ENCODE measurements at regions of chr17 and their contacts with region 1.

Region 1: GRCh38 chr17:81346090-81346907 is 49.0 kb upstream of the BAHCC1 start:
- DNase-seq: peak; percentile 93 to 99
- H3K4me3 ChIP-seq: peak overlapping the region; percentile 83 to 94
- H3K27ac ChIP-seq: peak overlapping the region; percentile 82 to 91
- H3K4me1 ChIP-seq: peaks cover 0 to 22% of the 10 kb centered on the region in 2 donors
- H3K27me3 ChIP-seq: no peaks in the 10 kb centered on the region
- CTCF ChIP-seq: no peak

Region 2: GRCh38 chr17:81165246-81166032 is 180.9 kb before region 1 on chr17 and contains the start of gene PVALEF:
- intact Hi-C with region 1: no loop called
- DNase-seq: no peak
- H3K4me3 ChIP-seq: peak within 1 kb of the TSS; percentile 25 to 67
- H3K27ac ChIP-seq: peak within 1 kb of the TSS; percentile 5 to 33
- H3K4me1 ChIP-seq: peaks cover 3% of the 10 kb centered on the region in 2 donors
- H3K27me3 ChIP-seq: no peaks in the 10 kb centered on the region
- CTCF ChIP-seq: no peak
- total RNA-seq, gene PVALEF: not detected

Region 3: GRCh38 chr17:81309070-81309905 is 37.0 kb before region 1 on chr17:
- intact Hi-C with region 1: no loop called
- DNase-seq: peak; percentile 54 to 91
- H3K4me3 ChIP-seq: peak overlapping the region; percentile 16 to 42
- H3K27ac ChIP-seq: peak overlapping the region in 1 of 2 donors; percentile 62
- H3K4me1 ChIP-seq: peaks cover 0 to 8% of the 10 kb centered on the region in 2 donors
- H3K27me3 ChIP-seq: no peaks in the 10 kb centered on the region
- CTCF ChIP-seq: peak; percentile 44 to 54 (median 45)

Region 4: DNA sequence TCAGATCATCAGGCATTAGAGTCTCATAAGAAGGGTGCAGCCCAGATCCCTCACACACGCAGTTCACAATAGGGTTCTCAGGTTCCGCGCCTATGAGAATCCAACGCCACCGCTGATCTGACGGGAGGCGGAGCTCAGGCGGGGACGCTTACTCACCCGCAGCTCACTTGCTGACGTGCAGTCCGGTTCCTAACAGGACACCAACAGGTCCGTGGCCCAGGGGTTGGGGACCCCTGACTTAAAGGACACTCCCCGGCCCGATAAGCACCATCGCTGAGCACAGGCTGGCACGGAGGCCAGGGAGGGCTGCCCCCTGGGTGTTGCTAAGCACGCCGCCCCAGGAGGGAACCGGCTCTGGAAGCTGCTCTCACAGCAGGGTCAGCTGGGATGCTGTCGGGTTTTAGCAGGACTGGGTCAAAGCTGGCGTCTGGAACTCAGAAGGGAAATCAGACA is 18.9 kb after region 1 on chr17:
- intact Hi-C with region 1: loop called (anchors 1 kb)
- DNase-seq: peak; percentile 51 to 85
- H3K4me3 ChIP-seq: peak overlapping the region; percentile 20 to 59
- H3K27ac ChIP-seq: peak overlapping the region; percentile 74 to 78
- H3K4me1 ChIP-seq: peaks cover 4 to 9% of the 10 kb centered on the region in 2 donors
- H3K27me3 ChIP-seq: no peaks in the 10 kb centered on the region
- CTCF ChIP-seq: no peak

Region 5: DNA sequence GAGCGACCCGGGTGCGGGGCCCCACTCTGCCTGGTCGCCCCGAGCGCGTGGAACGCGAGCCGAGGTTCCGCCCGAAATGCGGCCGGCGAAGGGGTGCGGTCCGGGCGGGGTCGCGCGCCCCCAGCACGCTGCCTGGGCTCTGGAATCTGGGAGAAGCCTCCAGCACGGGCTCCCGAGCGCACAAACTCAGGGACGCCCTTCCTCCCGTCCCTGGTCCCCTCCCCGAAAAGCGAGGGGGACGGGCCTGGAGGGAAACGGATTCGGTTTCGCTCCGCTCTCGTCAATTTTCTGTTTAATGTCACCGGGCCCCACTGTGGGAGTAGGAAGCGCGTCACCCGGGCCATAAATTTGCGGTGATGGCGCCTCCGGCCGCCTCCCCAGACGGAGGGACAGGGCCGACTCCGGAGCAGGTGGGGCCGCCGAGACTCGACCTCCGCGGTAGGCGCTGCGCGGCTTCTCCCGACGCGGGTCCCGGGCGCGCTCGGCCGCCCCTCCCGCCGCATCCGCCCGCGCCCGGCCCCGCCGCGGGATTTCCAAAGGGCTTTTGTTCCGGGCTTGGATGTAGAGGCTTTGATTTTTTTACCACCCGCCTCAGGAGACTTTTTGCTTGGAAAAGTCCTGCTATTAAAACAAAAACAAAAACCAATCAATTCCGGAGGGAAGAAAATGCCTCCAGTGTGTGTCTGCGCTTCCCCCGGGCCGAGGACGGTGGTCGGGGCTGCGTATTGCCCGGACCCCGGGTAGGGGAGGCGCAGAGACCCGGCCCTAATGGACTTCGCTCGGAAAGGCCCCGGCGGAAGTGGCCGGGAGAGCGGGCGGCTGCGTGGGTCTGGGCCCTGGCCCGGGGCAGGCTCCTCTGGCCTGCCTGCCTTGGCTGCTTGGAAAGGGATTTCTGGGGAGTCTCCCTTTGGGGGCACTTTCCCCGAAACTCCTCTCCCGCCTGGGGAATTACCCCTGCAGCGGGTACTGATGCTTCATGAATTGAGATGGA is 41.1 kb after region 1 on chr17:
- intact Hi-C with region 1: loop called (anchors 2 kb)
- DNase-seq: no peak
- H3K4me3 ChIP-seq: peak overlapping the region; percentile 79 to 89
- H3K27ac ChIP-seq: peak overlapping the region; percentile 89 to 93
- H3K4me1 ChIP-seq: peaks cover 11 to 34% of the 10 kb centered on the region in 2 donors
- H3K27me3 ChIP-seq: no peaks in the 10 kb centered on the region
- CTCF ChIP-seq: no peak

Region 6: DNA sequence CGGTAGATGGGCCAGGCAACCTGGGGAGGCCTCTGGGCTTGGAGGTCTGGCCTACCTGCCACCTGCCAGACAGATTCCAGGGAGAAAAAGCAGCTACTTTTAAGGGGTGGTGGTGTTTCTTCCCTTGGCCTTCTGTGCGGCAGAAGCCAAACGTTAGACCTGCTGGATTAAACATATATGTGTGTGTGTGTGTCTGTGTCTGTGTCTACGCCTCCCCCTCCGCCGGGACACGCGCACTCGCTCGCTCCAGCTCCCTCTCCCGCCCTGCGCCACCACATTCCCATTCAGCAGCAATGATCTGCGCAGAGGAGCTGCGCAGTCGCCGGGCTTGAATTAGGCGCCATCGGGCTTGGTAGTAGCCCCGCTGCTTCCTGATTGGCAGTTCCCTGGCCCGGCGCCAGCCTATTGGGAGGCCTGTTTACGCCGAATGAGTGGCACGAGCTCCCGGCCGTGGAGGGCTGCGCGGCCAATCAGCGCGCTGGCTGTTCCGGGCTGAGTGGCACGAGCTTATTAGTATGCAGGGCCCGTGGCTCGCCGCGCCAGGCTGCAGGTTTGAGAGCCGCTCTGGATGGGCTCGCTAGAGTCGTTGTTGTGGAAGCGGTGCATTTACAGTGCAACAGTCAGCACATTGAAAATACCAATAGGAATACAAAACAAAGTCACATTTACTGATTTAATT is 48.8 kb after region 1 on chr17 and contains the start of gene BAHCC1:
- intact Hi-C with region 1: loop called (anchors 1 kb)
- DNase-seq: peak; percentile 100
- H3K4me3 ChIP-seq: peak within 1 kb of the TSS; percentile 81 to 93
- H3K27ac ChIP-seq: peak within 1 kb of the TSS; percentile 94 to 97
- H3K4me1 ChIP-seq: peaks cover 14 to 22% of the 10 kb centered on the region in 2 donors
- H3K27me3 ChIP-seq: no peaks in the 10 kb centered on the region
- CTCF ChIP-seq: no peak
- total RNA-seq, gene BAHCC1: 29.1 TPM

Measured in ascending aorta (tissue), 2 donors.